Ovary (tissue), 10 donors: ENCODE measurements at regions of chr19 and their contacts with region 1.

Region 1: DNA sequence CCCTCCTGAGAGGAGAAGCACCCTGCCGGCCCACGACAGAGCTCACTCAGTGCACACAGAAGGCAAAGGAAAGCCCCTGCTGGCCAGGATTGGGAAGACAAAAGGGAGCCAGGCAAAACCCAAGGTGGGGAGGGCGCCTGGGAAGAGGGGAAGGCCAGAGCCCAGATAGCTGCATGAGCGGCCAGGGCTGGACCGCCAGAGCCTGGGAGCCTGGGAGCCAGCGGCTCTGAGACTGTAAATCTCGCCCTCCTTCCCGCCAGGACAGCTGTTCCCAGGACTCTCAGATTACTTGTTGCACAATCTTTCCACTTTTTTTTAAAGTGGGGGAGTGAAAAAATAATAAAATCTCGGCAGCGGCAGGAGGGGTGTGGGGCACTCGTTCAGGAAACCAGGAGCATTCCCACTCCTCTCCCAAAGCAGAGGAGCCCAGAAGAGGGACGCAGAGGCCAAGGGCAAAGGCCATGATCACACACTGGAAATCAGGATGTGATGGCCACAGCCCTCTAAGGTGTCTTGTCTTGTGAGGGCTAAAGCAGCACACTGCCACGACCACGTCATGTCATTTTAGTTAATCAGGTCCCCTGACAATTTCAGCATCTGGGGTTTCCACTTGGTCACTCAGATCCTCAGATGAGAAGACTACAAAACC is 19.6 kb upstream of the EPHX3 start:
- DNase-seq: peak; percentile 89 to 92 (median 92)
- H3K4me3 ChIP-seq: peak overlapping the region; percentile 19
- H3K27ac ChIP-seq: peak overlapping the region in 1 of 2 donors; percentile 75
- H3K4me1 ChIP-seq: peaks cover 43% of the 10 kb centered on the region
- H3K27me3 ChIP-seq: no peaks in the 10 kb centered on the region
- CTCF ChIP-seq: peak; percentile 45 to 76 (median 67)
- EP300 ChIP-seq: peak; percentile 72
- POLR2A ChIP-seq: no peak

Region 2: GRCh38 chr19:15115111-15116053 is 136.5 kb before region 1 on chr19:
- intact Hi-C with region 1: loop called in 1 of 4 experiments (anchors 10 kb)
- DNase-seq: peak; percentile 76 to 88 (median 76)
- H3K4me3 ChIP-seq: no peak overlapping the region
- H3K27ac ChIP-seq: peak overlapping the region in 1 of 2 donors; percentile 30
- H3K4me1 ChIP-seq: no peaks in the 10 kb centered on the region
- H3K27me3 ChIP-seq: no peaks in the 10 kb centered on the region
- CTCF ChIP-seq: no peak
- EP300 ChIP-seq: no peak
- POLR2A ChIP-seq: no peak

Region 3: GRCh38 chr19:15177269-15178116 is 74.4 kb before region 1 on chr19:
- intact Hi-C with region 1: loop called in 2 of 4 experiments (anchors 5 to 10 kb)
- DNase-seq: peak; percentile 58 to 87 (median 79)
- H3K4me3 ChIP-seq: no peak overlapping the region
- H3K27ac ChIP-seq: no peak overlapping the region
- H3K4me1 ChIP-seq: no peaks in the 10 kb centered on the region
- H3K27me3 ChIP-seq: no peaks in the 10 kb centered on the region
- CTCF ChIP-seq: peak; percentile 80 to 96 (median 96)
- EP300 ChIP-seq: no peak
- POLR2A ChIP-seq: no peak

Region 4: GRCh38 chr19:15195371-15196334 is 56.2 kb before region 1 on chr19:
- intact Hi-C with region 1: loop called in 1 of 4 experiments (anchors 5 kb)
- DNase-seq: peak in 2 of 5 donors; percentile 50 to 56
- H3K4me3 ChIP-seq: peak overlapping the region; percentile 25
- H3K27ac ChIP-seq: peak overlapping the region in 1 of 2 donors; percentile 16
- H3K4me1 ChIP-seq: no peaks in the 10 kb centered on the region
- H3K27me3 ChIP-seq: no peaks in the 10 kb centered on the region
- CTCF ChIP-seq: no peak
- EP300 ChIP-seq: no peak
- POLR2A ChIP-seq: no peak

Region 5: DNA sequence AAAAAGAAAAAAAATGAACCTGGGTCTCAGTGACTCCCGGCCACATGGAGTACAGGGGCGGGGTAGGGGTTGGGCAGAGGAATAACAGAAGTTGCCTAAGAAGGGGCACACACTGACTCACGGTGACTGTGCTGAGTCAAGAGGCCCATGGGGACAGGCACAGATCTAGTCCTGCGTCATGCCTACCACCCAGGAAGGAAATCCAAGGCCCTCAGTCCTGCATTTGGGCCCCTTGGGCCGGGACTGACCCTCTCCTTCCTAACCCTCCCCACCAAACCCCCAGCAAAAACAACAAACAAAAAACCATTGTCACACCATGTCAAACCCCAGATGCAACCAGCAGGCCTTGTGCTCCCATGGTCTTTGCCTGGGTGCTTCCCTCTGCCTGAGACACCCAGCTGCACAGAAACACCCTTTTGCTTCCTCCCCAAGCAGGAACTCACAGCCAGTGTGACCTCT is 41.5 kb before region 1 on chr19:
- intact Hi-C with region 1: no loop called
- DNase-seq: peak in 1 of 5 donors; percentile 42
- H3K4me3 ChIP-seq: no peak overlapping the region
- H3K27ac ChIP-seq: no peak overlapping the region
- H3K4me1 ChIP-seq: peaks cover 1% of the 10 kb centered on the region
- H3K27me3 ChIP-seq: no peaks in the 10 kb centered on the region
- CTCF ChIP-seq: no peak
- EP300 ChIP-seq: no peak
- POLR2A ChIP-seq: no peak

Region 6: DNA sequence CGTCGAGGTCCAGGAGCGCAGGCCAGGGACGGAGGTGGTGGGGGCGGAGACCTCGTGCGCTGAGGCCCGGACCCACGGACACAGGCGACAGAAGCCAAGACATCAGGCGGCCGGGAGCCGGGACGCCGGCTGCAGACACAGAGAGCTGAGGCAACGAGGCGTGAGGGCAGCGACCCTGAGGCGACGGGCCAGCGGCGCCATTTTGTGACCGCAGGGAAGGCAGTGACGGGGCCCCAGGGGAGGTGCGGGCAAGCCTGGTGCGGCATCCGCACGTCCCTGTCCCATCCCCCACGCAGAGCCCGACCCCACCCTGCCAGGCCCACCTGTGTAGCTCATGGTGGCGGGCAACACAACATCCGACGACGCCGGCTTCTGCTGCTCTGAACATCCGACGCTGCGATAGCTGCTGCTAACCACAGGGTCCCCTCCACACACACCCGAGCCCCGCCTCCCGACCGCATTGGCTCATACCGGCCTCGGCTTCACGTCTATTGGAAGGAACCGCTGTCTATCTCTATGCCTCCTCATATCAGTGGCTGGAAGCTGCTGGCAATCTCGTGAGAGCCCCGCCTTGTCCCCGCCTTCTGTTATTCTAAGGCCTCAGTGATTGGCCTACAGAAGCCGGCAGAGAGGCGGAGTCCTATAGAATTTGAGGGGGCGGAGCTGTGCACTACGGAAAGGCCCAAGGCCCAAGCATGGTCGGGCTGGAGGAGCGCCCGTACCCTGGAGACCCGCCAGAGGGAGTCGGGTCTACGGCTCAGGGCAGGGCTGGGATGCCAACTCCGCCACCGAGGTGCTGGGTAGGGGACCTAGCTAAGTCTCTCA is 166.9 kb after region 1 on chr19 and contains the start of gene AKAP8L:
- intact Hi-C with region 1: loop called in 1 of 4 experiments (anchors 10 kb)
- DNase-seq: peak; percentile 97 to 99 (median 98)
- H3K4me3 ChIP-seq: peak within 1 kb of the TSS; percentile 99
- H3K27ac ChIP-seq: peak within 1 kb of the TSS; percentile 22 to 67
- H3K4me1 ChIP-seq: peaks cover 25% of the 10 kb centered on the region
- H3K27me3 ChIP-seq: no peaks in the 10 kb centered on the region
- CTCF ChIP-seq: peak; percentile 37 to 56 (median 49)
- EP300 ChIP-seq: no peak
- POLR2A ChIP-seq: peak; percentile 83
- total RNA-seq, gene AKAP8L: 85.9 to 121 (median 93.2) TPM